Gastrocnemius medialis (tissue), 4 donors: ENCODE measurements at regions of chr11 and their contacts with region 1.

Region 1: GRCh38 chr11:16738193-16738946 is at the start of gene C11orf58:
- DNase-seq: peak; percentile 94 to 97
- ATAC-seq: peak; percentile 97 to 98
- H3K4me3 ChIP-seq: peak within 1 kb of the TSS; percentile 78 to 91 (median 87)
- H3K27ac ChIP-seq: peak within 1 kb of the TSS; percentile 94 to 97 (median 94)
- H3K4me1 ChIP-seq: peaks cover 37 to 41% of the 10 kb centered on the region in 2 donors
- H3K27me3 ChIP-seq: no peaks in the 10 kb centered on the region
- CTCF ChIP-seq: peak in 1 of 5 experiments; percentile 13
- POLR2A ChIP-seq: peak; percentile 94 to 95
- total RNA-seq, gene C11orf58: 103 to 170 (median 134) TPM

Region 2: DNA sequence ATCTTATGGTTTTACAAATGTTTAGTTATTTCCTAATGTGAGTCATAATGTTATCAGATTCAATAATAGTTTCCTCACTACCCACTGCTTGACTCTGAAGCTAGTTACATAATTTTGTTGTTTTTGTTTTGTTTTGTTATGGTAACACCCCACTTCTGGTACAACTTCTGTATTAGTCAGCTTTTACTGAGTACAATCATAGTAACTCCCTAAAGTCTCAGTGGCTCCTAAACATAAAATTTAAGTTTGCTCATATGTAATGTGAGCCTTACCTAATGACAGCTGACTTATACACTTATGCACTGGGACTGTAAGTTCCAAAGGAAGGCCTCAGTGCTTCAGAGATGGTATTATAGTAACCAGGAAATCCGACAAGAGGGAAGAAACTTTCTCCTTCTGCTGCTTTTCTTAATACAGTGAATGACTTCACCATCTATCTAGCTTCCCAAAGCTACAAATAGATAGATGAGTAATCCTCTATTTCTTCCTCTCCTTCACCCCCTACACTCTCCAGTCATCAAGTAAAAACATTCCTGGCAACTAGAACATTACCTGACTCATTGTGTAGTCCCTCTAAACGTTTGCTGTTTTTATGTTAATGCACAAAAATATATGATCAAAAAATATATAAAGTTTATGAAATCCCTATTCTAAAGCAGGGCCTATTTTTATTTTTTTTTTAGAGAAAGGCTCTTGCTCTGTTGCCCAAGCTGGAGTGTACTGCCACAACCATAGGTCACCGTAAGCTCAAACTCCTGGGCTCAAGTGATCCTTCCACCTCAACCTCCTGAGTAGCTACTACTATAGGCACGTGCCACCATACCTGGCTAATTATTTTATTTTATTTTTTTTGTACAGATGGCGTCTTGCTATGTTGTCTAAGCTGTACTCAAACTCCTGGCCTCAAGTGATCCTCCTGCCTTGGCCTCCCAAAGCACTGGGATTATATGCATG is 945.0 kb before region 1 on chr11:
- in situ Hi-C with region 1: no loop called
- intact Hi-C with region 1: loop called (anchors 5 kb)
- DNase-seq: no peak
- ATAC-seq: peak; percentile 98 to 99
- H3K4me3 ChIP-seq: peak overlapping the region in 1 of 4 donors; percentile 1
- H3K27ac ChIP-seq: peak overlapping the region; percentile 70 to 87 (median 80)
- H3K4me1 ChIP-seq: peaks cover 7 to 20% of the 10 kb centered on the region in 2 donors
- H3K27me3 ChIP-seq: no peaks in the 10 kb centered on the region
- CTCF ChIP-seq: no peak
- POLR2A ChIP-seq: no peak

Region 3: DNA sequence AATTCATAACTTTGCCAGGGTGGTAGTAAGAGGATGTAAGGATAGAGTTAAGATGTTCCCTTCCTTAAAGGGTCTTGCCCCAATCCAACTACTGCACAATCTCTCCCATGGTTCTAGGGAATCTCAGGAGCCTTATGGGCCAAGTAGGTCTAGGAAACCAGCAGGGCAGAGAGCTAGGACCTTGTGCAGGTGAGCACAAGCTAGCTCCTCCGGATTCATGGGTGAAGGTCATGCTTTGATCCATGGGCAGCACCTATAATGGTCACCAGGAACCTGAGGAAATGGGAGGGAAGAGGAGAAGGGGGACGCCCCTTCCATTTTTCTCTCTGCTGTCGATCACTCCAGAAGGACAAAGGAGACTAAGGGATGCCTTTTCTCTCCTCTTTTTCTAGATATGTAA is 633.2 kb after region 1 on chr11:
- in situ Hi-C with region 1: no loop called
- intact Hi-C with region 1: no loop called
- DNase-seq: no peak
- ATAC-seq: no peak
- H3K4me3 ChIP-seq: no peak overlapping the region
- H3K27ac ChIP-seq: no peak overlapping the region
- H3K4me1 ChIP-seq: peaks cover 13 to 24% of the 10 kb centered on the region in 2 donors
- H3K27me3 ChIP-seq: no peaks in the 10 kb centered on the region
- CTCF ChIP-seq: no peak
- POLR2A ChIP-seq: no peak